ENCODE measurements at regions of chr5 and their contacts with region 1.

Region 1: DNA sequence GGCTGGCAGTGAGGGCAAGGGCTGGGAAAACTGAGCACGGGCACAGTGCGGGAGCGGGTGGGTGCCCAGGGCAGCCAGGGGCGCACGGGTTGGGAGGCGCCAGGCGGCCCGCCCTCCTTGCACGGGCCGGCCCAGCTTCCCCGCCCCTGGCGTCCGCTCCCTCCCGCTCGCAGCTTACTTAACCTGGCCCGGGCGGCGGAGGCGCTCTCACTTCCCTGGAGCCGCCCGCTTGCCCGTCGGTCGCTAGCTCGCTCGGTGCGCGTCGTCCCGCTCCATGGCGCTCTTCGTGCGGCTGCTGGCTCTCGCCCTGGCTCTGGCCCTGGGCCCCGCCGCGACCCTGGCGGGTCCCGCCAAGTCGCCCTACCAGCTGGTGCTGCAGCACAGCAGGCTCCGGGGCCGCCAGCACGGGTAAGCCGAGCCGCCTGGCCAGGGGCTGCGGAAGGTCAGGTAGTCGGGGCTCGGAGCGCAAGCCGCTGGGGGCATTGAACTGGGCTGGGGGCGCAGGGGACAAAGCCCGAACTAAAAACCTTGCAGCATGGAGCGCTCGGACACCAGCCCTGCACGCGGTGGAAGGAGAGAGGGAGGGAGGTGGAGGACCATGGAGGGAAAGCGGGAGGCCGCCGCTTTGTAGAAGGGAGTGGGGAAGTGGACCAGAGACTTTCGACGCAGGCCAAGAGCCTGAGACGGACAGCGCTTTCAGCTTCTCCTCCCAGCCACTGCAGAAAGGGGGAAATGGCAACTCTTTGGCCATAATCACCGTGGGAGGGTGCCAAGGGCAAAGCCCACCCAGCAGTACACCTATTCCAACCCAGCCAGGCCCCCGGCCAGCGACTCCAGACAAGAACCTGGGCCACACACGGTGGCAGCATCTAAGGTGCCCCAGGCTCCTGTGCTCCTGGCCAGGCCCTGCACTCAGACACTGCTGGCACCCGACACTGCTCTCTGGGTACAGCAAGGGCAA is at the start of gene TGFBI:
- DNase-seq: peak; percentile 91
- total RNA-seq, gene TGFBI: 173 to 286 TPM

Region 2: DNA sequence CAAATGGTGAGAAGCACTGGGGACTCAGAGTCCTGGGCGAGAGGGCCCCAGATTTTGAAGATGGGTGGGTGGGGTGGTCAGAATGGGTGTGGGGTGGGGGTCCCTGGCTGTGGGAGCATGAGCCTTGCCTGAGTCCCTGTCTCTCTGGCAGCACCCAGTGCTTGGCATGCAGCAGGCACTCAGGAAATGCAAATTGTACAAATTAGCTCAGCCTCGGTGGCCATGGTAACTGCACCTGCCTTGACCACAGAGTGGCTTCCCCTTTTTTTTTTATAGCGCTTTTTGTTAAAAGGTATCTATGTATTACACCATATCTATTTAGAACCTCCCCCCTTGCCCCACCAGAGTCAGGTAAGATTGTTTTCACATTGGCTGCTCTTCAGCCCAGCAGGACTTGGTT is 975.8 kb before region 1 on chr5:
- intact Hi-C with region 1: no loop called
- DNase-seq: no peak

Region 3: DNA sequence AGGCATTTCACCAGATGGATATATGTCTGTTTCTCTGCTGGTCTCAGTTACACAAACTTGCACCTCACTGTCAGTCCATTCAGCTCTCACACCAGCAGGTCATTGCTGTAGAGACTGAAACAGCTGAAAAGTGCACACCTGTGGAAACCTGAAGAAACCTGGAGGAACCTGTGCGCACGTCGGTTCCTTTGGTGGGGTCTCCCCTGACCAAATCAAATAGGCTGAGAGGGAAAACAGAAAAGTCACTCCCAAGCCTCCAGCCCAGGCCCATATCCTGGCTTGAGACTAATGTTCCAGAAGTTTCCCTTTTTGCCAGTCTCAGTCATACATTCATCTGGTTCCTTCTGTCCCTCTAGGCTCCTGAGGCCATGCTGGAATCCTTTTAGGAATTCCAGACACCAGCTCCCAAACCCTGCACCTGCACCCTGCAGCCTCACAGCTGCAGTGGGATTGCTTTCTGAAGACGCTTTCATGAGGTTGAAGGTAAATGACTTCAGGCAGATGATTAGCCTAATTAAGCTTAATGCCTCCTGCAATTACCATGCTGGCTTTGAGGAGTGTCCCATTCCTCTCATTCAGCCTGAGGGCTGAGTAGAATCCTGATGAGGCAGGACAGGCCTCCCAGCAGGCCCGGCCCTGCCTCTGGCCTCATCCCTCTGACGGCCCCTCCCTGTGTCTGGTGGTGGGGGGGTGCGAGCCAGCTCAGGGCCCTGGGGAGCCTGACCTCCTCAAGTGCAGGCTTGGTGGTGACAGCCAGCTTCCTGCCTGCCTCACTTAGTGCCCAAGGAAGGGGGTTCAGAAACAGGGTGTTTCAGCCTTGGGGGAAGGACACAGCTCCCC is 426.0 kb before region 1 on chr5:
- intact Hi-C with region 1: no loop called
- DNase-seq: no peak

Region 4: GRCh38 chr5:136053336-136054141 is 24.5 kb after region 1 on chr5:
- intact Hi-C with region 1: loop called in 1 of 2 experiments (anchors 2 kb)
- DNase-seq: no peak

Measured in posterior vena cava (tissue), 2 donors.